ENCODE measurements at regions of chr1 and their contacts with region 1.

Region 1: DNA sequence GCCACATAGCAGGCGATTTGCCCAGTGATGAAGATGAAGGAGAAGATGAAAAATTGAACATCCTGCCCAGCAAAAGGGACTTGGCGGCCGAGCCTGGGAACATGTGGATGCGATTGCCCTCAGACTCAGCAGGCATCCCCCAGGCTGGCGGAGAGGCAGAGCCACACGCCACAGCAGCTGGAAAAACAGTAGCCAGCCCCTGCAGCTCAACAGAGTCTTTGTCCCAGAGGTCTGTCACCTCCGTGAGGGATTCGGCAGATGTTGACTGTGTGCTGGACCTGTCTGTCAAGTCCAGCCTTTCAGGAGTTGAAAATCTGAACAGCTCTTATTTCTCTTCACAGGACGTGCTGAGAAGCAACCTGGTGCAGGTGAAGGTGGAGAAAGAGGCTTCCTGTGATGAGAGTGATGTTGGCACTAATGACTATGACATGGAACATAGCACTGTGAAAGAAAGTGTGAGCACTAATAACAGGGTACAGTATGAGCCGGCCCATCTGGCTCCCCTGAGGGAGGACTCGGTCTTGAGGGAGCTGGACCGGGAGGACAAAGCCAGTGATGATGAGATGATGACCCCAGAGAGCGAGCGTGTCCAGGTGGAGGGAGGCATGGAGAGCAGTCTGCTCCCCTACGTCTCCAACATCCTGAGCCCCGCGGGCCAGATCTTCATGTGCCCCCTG is 3.3 kb downstream of the ZBTB18 start:
- DNase-seq: no peak
- ATAC-seq: peak; percentile 34
- H3K4me3 ChIP-seq: no peak overlapping the region
- H3K4me3 Mint-ChIP-seq: no peak overlapping the region
- H3K27ac ChIP-seq: peak overlapping the region in 1 of 2 experiments; percentile 48
- H3K27ac Mint-ChIP-seq: no peak overlapping the region
- H3K4me1 ChIP-seq: peaks cover 46% of the 10 kb centered on the region
- H3K4me1 Mint-ChIP-seq: peaks cover 36% of the 10 kb centered on the region
- H3K27me3 ChIP-seq: no peaks in the 10 kb centered on the region
- H3K27me3 Mint-ChIP-seq: no peaks in the 10 kb centered on the region
- CTCF ChIP-seq: no peak

Region 2: GRCh38 chr1:244021947-244022700 is 32.3 kb before region 1 on chr1:
- CTCF ChIA-PET with region 1: no interaction called
- POLR2A ChIA-PET with region 1: no interaction called
- intact Hi-C with region 1: no loop called
- DNase-seq: no peak
- ATAC-seq: no peak
- H3K4me3 ChIP-seq: no peak overlapping the region
- H3K4me3 Mint-ChIP-seq: no peak overlapping the region
- H3K27ac ChIP-seq: no peak overlapping the region
- H3K27ac Mint-ChIP-seq: no peak overlapping the region
- H3K4me1 ChIP-seq: no peaks in the 10 kb centered on the region
- H3K4me1 Mint-ChIP-seq: no peaks in the 10 kb centered on the region
- H3K27me3 ChIP-seq: no peaks in the 10 kb centered on the region
- H3K27me3 Mint-ChIP-seq: peaks cover 5% of the 10 kb centered on the region
- CTCF ChIP-seq: no peak

Region 3: GRCh38 chr1:244035358-244035757 is 19.0 kb before region 1 on chr1:
- CTCF ChIA-PET with region 1: no interaction called
- POLR2A ChIA-PET with region 1: no interaction called
- intact Hi-C with region 1: no loop called
- DNase-seq: no peak
- ATAC-seq: no peak
- H3K4me3 ChIP-seq: no peak overlapping the region
- H3K4me3 Mint-ChIP-seq: no peak overlapping the region
- H3K27ac ChIP-seq: no peak overlapping the region
- H3K27ac Mint-ChIP-seq: no peak overlapping the region
- H3K4me1 ChIP-seq: no peaks in the 10 kb centered on the region
- H3K4me1 Mint-ChIP-seq: no peaks in the 10 kb centered on the region
- H3K27me3 ChIP-seq: peaks cover 0 to 5% of the 10 kb centered on the region in 2 experiments
- H3K27me3 Mint-ChIP-seq: peaks cover 13% of the 10 kb centered on the region
- CTCF ChIP-seq: no peak

Region 4: DNA sequence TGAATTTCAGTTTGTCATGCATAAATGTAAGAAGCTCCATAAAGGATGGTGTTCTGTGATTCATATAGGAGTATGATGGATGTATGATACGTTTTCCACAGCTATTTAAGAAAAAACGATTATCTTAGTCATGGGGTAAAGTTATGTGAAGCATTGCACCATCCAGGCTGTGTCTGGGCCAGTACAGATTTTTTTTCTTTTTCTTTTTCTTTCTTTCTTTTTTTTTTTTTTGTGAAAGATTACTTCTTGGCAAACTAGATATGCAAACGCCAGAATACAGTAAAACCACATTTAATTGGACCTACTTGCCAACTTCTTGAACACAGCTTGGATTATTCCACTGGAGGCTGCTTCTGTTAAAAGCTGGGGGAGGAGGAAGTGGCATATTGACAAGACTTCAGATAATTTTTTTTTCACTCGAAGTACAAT is 11.6 kb after region 1 on chr1:
- CTCF ChIA-PET with region 1: interaction called, 5 read pairs
- POLR2A ChIA-PET with region 1: interaction called, 11 read pairs
- intact Hi-C with region 1: no loop called
- DNase-seq: no peak
- ATAC-seq: no peak
- H3K4me3 ChIP-seq: no peak overlapping the region
- H3K4me3 Mint-ChIP-seq: no peak overlapping the region
- H3K27ac ChIP-seq: no peak overlapping the region
- H3K27ac Mint-ChIP-seq: no peak overlapping the region
- H3K4me1 ChIP-seq: no peaks in the 10 kb centered on the region
- H3K4me1 Mint-ChIP-seq: peaks cover 11% of the 10 kb centered on the region
- H3K27me3 ChIP-seq: no peaks in the 10 kb centered on the region
- H3K27me3 Mint-ChIP-seq: no peaks in the 10 kb centered on the region
- CTCF ChIP-seq: no peak

Region 5: GRCh38 chr1:244074559-244075171 is 20.3 kb after region 1 on chr1:
- CTCF ChIA-PET with region 1: interaction called, 12 read pairs
- POLR2A ChIA-PET with region 1: interaction called, 96 read pairs
- intact Hi-C with region 1: loop called (anchors 1 kb)
- DNase-seq: peak; percentile 47 to 92 (median 74)
- ATAC-seq: peak; percentile 90
- H3K4me3 ChIP-seq: peak overlapping the region; percentile 38 to 41
- H3K4me3 Mint-ChIP-seq: peak overlapping the region; percentile 80
- H3K27ac ChIP-seq: peak overlapping the region; percentile 66 to 67
- H3K27ac Mint-ChIP-seq: peak overlapping the region; percentile 98
- H3K4me1 ChIP-seq: peaks cover 31% of the 10 kb centered on the region
- H3K4me1 Mint-ChIP-seq: peaks cover 45% of the 10 kb centered on the region
- H3K27me3 ChIP-seq: no peaks in the 10 kb centered on the region
- H3K27me3 Mint-ChIP-seq: no peaks in the 10 kb centered on the region
- CTCF ChIP-seq: no peak

Region 6: GRCh38 chr1:244112636-244113035 is 58.3 kb after region 1 on chr1:
- CTCF ChIA-PET with region 1: no interaction called
- POLR2A ChIA-PET with region 1: no interaction called
- intact Hi-C with region 1: loop called in 1 of 2 experiments (anchors 5 kb)
- DNase-seq: no peak
- ATAC-seq: no peak
- H3K4me3 ChIP-seq: no peak overlapping the region
- H3K4me3 Mint-ChIP-seq: no peak overlapping the region
- H3K27ac ChIP-seq: no peak overlapping the region
- H3K27ac Mint-ChIP-seq: no peak overlapping the region
- H3K4me1 ChIP-seq: no peaks in the 10 kb centered on the region
- H3K4me1 Mint-ChIP-seq: no peaks in the 10 kb centered on the region
- H3K27me3 ChIP-seq: no peaks in the 10 kb centered on the region
- H3K27me3 Mint-ChIP-seq: peaks cover 6% of the 10 kb centered on the region
- CTCF ChIP-seq: no peak

Measured in CD8-positive, alpha-beta T cell (primary cell).